Activated CD4-positive, alpha-beta memory T cell treated with anti-CD3 and anti-CD28 coated beads for 36 hours (primary cell): ENCODE measurements at regions of chr2 and their contacts with region 1.

Region 1: DNA sequence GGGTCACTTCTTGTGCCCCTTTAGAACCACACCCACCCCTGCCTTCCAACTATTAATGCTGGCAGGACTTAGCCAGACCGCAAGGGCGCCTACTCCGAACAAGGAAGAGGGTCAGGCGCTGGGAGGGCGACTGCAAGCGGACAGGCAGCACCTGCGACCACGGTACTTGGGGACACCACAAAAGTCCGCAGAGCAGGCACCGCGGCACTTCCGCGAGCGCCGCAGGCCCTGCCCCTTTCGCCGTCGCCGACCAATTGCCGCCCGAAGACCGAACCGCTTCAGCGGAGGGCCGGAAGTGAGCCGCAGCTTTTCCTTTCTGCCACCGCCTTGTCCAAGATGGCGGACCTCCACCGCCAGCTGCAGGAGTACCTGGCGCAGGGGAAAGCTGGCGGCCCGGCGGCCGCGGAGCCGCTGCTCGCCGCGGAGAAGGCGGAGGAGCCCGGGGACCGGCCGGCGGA is at the start of gene SFT2D3:
- DNase-seq: peak; percentile 95
- H3K4me3 Mint-ChIP-seq: peak within 1 kb of the TSS; percentile 92
- H3K27ac Mint-ChIP-seq: peak within 1 kb of the TSS; percentile 95
- H3K4me1 Mint-ChIP-seq: peaks cover 37% of the 10 kb centered on the region
- H3K27me3 Mint-ChIP-seq: no peaks in the 10 kb centered on the region
- total RNA-seq, gene SFT2D3: 3.1 to 3.6 TPM

Region 2: GRCh38 chr2:127422810-127423475 is 278.3 kb before region 1 on chr2:
- CTCF ChIA-PET with region 1: no interaction called
- POLR2A ChIA-PET with region 1: no interaction called
- intact Hi-C with region 1: no loop called
- DNase-seq: peak; percentile 30
- H3K4me3 Mint-ChIP-seq: peak overlapping the region; percentile 29
- H3K27ac Mint-ChIP-seq: no peak overlapping the region
- H3K4me1 Mint-ChIP-seq: peaks cover 7% of the 10 kb centered on the region
- H3K27me3 Mint-ChIP-seq: peaks cover 42% of the 10 kb centered on the region

Region 3: DNA sequence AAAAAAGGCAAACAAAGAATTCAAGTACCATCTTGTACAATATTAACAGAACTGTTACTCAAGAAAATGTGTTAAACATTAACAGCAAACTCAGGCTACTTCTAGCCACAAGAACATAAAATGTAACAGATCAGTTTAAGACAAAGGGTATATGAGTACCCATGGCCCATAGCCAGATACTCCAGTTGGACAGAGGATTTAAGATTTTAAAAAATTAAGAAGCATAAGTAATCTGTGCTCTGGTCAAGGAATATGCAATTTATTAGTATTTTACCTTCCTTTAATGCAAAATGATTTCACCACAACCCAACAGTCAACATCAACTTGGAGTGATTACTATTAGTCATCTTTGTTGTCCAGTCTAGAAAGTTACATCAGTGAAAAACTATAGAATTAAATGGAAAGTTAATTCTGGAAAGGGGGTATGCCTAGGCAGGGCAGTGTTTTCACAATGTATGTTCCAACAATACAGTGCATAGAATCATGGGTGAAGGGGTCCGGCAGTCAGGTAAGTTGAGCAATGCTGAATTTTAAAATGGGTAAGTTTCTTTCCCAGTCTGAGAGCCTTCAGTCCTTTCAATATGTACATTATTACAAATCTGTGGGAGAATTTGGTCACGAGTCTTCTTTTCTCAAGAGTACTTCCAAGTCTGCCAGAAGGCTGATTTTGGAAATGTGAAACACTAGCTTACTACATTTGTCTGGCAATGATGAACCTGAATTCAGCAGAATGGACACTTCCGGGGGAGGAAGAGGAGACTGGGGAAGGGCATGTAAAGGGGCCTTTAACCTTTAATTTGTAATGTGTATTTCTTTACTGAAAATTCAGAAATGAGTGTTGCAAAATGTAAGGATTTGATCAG is 34.5 kb after region 1 on chr2:
- CTCF ChIA-PET with region 1: no interaction called
- POLR2A ChIA-PET with region 1: no interaction called
- intact Hi-C with region 1: loop called (anchors 5 kb)
- DNase-seq: no peak
- H3K4me3 Mint-ChIP-seq: no peak overlapping the region
- H3K27ac Mint-ChIP-seq: no peak overlapping the region
- H3K4me1 Mint-ChIP-seq: peaks cover 31% of the 10 kb centered on the region
- H3K27me3 Mint-ChIP-seq: no peaks in the 10 kb centered on the region

Region 4: DNA sequence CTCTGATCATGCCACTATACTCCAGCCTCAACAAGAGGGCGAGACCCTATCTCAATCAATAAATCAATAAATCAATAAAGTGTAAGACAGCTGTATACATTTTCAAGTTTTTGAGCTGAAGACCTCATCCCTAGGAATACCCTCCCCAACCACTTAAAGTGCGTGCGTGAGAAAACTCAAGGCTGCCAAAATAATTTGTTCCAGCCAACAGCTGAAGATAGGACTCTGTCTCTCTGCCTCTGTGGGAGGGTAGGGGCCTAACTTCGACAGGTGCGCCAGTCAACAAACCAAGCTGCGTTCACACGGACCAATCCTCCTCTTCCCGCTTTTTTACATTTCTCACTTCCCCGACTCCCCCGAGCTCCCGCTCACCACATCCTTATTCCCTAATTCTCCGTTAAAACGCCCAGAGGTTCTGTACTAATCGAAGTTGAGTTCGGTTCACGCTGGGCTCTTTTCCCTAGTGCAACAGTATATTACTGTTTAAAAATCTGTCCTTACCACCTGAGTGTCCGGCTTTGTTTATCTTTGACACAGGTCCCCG is 156.1 kb after region 1 on chr2:
- CTCF ChIA-PET with region 1: no interaction called
- POLR2A ChIA-PET with region 1: interaction called, 6 read pairs
- intact Hi-C with region 1: loop called (anchors 5 kb)
- DNase-seq: peak; percentile 14
- H3K4me3 Mint-ChIP-seq: peak overlapping the region; percentile 88
- H3K27ac Mint-ChIP-seq: peak overlapping the region; percentile 77
- H3K4me1 Mint-ChIP-seq: peaks cover 51% of the 10 kb centered on the region
- H3K27me3 Mint-ChIP-seq: no peaks in the 10 kb centered on the region